SK-N-SH (cell line): ENCODE measurements at regions of chr11 and their contacts with region 1.

Region 1: GRCh38 chr11:67658691-67659271 is 8.3 kb upstream of the ACY3 start:
- DNase-seq: no peak
- H3K4me3 ChIP-seq: no peak overlapping the region
- H3K27ac ChIP-seq: no peak overlapping the region
- H3K4me1 ChIP-seq: no peaks in the 10 kb centered on the region; a peak in 1 of 4 replicates
- H3K27me3 ChIP-seq: peaks cover 5% of the 10 kb centered on the region; the same call in 1 of the 2 replicates
- CTCF ChIP-seq: no peak
- EP300 ChIP-seq: no peak
- RAD21 ChIP-seq: no peak

Region 2: GRCh38 chr11:67468835-67469811 is 189.7 kb before region 1 on chr11 and contains the start of gene TMEM134:
- CTCF ChIA-PET with region 1: no interaction called
- POLR2A ChIA-PET with region 1: no interaction called
- DNase-seq: peak; percentile 98
- H3K4me3 ChIP-seq: peak within 1 kb of the TSS; percentile 73 to 90
- H3K27ac ChIP-seq: peak within 1 kb of the TSS; percentile 66 to 72; a peak in 3 of 4 replicates
- H3K4me1 ChIP-seq: peaks cover 3 to 30% of the 10 kb centered on the region in 2 experiments; a peak in 2 of 4 replicates
- H3K27me3 ChIP-seq: no peaks in the 10 kb centered on the region
- CTCF ChIP-seq: peak; percentile 50
- EP300 ChIP-seq: no peak
- RAD21 ChIP-seq: peak; percentile 58
- polyA plus RNA-seq, gene TMEM134: 132 and 135 TPM in 2 replicates

Region 3: GRCh38 chr11:67572747-67573419 is 85.9 kb before region 1 on chr11:
- CTCF ChIA-PET with region 1: interaction called, 10 read pairs
- POLR2A ChIA-PET with region 1: no interaction called
- DNase-seq: peak; percentile 53
- H3K4me3 ChIP-seq: no peak overlapping the region
- H3K27ac ChIP-seq: no peak overlapping the region
- H3K4me1 ChIP-seq: peaks cover 0 to 6% of the 10 kb centered on the region in 2 experiments; a peak in 1 of 4 replicates
- H3K27me3 ChIP-seq: peaks cover 6% of the 10 kb centered on the region
- CTCF ChIP-seq: peak; percentile 64
- EP300 ChIP-seq: no peak
- RAD21 ChIP-seq: peak; percentile 79

Region 4: DNA sequence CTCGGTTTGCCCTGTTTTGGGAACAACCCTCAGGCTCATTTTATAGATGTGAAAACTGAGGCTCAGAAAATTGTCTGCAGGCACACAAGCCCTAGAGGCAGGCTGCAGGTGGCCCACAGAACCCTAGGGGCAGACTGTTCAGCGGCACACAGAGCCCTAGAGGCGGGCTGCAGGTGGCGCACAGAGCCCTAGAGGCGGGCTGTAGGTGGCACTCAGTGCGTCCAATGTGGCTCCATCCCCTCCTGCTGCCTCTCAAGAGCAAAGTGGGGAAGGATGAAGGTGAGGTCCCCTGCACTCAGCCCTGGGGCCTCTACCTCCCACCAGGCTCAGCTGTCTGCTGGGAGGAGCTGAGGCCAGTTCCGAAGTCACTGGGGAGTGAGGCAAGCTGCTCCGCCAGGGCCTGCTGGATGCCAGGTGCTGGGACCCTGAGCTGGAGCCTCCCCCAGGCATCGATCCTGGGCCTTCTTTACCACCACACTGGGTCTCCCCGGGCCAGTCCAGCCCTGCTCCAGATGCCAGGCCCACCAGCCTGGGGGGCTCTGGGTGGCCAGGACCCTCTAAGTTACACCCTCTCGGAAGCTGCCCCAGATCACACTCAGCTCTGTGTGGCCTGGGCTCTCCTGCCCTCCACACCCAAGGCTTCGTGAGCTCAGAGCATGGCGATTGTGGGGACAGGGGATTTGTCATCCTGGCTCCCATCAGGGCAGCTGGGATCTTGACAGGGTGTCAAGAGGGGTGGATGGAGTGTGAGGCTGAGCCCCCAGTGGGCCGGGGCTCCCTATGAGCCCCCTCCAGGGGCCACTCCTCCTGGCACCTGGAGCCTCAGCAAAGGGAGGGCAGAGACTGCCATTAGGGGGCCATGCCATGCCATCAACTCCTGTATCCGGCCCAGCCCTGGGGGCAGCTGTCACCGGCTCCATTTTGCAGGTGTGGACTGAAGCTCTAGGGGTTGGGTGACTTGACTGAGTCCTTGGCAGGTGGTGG is 10.3 kb before region 1 on chr11:
- CTCF ChIA-PET with region 1: interaction called, 308 read pairs
- POLR2A ChIA-PET with region 1: no interaction called
- DNase-seq: no peak
- H3K4me3 ChIP-seq: no peak overlapping the region
- H3K27ac ChIP-seq: no peak overlapping the region
- H3K4me1 ChIP-seq: no peaks in the 10 kb centered on the region; a peak in 1 of 4 replicates
- H3K27me3 ChIP-seq: no peaks in the 10 kb centered on the region
- CTCF ChIP-seq: no peak
- EP300 ChIP-seq: no peak
- RAD21 ChIP-seq: no peak

Region 5: GRCh38 chr11:67670316-67671190 is 11.8 kb after region 1 on chr11:
- CTCF ChIA-PET with region 1: interaction called, 14 read pairs
- POLR2A ChIA-PET with region 1: no interaction called
- DNase-seq: peak; percentile 18
- H3K4me3 ChIP-seq: no peak overlapping the region
- H3K27ac ChIP-seq: no peak overlapping the region
- H3K4me1 ChIP-seq: no peaks in the 10 kb centered on the region
- H3K27me3 ChIP-seq: peaks cover 7% of the 10 kb centered on the region; the same call in 1 of the 2 replicates
- CTCF ChIP-seq: no peak
- EP300 ChIP-seq: no peak
- RAD21 ChIP-seq: no peak

Region 6: GRCh38 chr11:68242616-68243015 is 583.8 kb after region 1 on chr11:
- CTCF ChIA-PET with region 1: no interaction called
- POLR2A ChIA-PET with region 1: no interaction called
- DNase-seq: no peak
- H3K4me3 ChIP-seq: no peak overlapping the region
- H3K27ac ChIP-seq: no peak overlapping the region
- H3K4me1 ChIP-seq: no peaks in the 10 kb centered on the region
- H3K27me3 ChIP-seq: no peaks in the 10 kb centered on the region; the same call in 1 of the 2 replicates
- CTCF ChIP-seq: no peak
- EP300 ChIP-seq: no peak
- RAD21 ChIP-seq: no peak